B cell (primary cell): ENCODE measurements at regions of chr11 and their contacts with region 1.

Region 1: GRCh38 chr11:123407130-123407995 is 22.7 kb upstream of the GRAMD1B start:
- DNase-seq: peak; percentile 39
- ATAC-seq: peak; percentile 39
- H3K4me3 ChIP-seq: no peak overlapping the region
- H3K4me3 Mint-ChIP-seq: no peak overlapping the region
- H3K27ac ChIP-seq: no peak overlapping the region
- H3K27ac Mint-ChIP-seq: no peak overlapping the region
- H3K4me1 ChIP-seq: no peaks in the 10 kb centered on the region
- H3K4me1 Mint-ChIP-seq: peaks cover 12% of the 10 kb centered on the region
- H3K27me3 ChIP-seq: peaks cover 0 to 2% (median 0%) of the 10 kb centered on the region in 4 experiments
- H3K27me3 Mint-ChIP-seq: peaks cover 2% of the 10 kb centered on the region
- CTCF ChIP-seq: peak; percentile 59

Region 2: GRCh38 chr11:123301696-123302400 is 105.5 kb before region 1 on chr11:
- CTCF ChIA-PET with region 1: no interaction called
- POLR2A ChIA-PET with region 1: no interaction called
- intact Hi-C with region 1: no loop called
- DNase-seq: peak; percentile 63
- ATAC-seq: peak; percentile 77
- H3K4me3 ChIP-seq: peak overlapping the region; percentile 24 to 45 (median 39)
- H3K4me3 Mint-ChIP-seq: peak overlapping the region; percentile 71
- H3K27ac ChIP-seq: no peak overlapping the region
- H3K27ac Mint-ChIP-seq: peak overlapping the region; percentile 39
- H3K4me1 ChIP-seq: peaks cover 14 to 25% of the 10 kb centered on the region in 2 donors
- H3K4me1 Mint-ChIP-seq: peaks cover 28% of the 10 kb centered on the region
- H3K27me3 ChIP-seq: peaks cover 0 to 12% (median 5%) of the 10 kb centered on the region in 4 experiments
- H3K27me3 Mint-ChIP-seq: peaks cover 6% of the 10 kb centered on the region
- CTCF ChIP-seq: peak; percentile 86

Region 3: DNA sequence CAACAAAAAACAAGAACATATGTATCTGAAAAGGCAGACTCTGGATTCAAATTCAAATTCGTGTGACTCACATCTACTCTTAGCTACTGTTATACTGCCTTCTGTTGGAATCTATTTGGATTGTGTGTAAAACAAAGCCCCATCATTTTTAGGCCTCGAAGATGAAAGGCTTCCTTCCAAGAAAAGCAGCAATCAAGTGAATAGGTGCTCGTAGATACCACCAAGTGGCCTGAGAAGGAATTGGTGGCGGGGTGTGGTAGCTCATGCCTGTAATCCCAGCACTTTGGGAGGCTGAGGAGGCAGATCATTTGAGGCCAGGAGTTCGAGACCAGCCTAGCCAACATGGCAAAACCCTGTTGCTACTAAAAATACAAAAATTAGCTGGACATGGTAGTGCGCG is 26.9 kb after region 1 on chr11:
- CTCF ChIA-PET with region 1: interaction called, 10 read pairs
- POLR2A ChIA-PET with region 1: no interaction called
- intact Hi-C with region 1: no loop called
- DNase-seq: no peak
- ATAC-seq: no peak
- H3K4me3 ChIP-seq: no peak overlapping the region
- H3K4me3 Mint-ChIP-seq: no peak overlapping the region
- H3K27ac ChIP-seq: no peak overlapping the region
- H3K27ac Mint-ChIP-seq: no peak overlapping the region
- H3K4me1 ChIP-seq: peaks cover 0 to 6% of the 10 kb centered on the region in 2 donors
- H3K4me1 Mint-ChIP-seq: peaks cover 12% of the 10 kb centered on the region
- H3K27me3 ChIP-seq: peaks cover 0 to 9% (median 2%) of the 10 kb centered on the region in 4 experiments
- H3K27me3 Mint-ChIP-seq: peaks cover 8% of the 10 kb centered on the region
- CTCF ChIP-seq: no peak

Region 4: GRCh38 chr11:123469089-123469488 is 61.7 kb after region 1 on chr11:
- CTCF ChIA-PET with region 1: interaction called, 33 read pairs
- POLR2A ChIA-PET with region 1: no interaction called
- intact Hi-C with region 1: no loop called
- DNase-seq: no peak
- ATAC-seq: no peak
- H3K4me3 ChIP-seq: no peak overlapping the region
- H3K4me3 Mint-ChIP-seq: no peak overlapping the region
- H3K27ac ChIP-seq: no peak overlapping the region
- H3K27ac Mint-ChIP-seq: no peak overlapping the region
- H3K4me1 ChIP-seq: no peaks in the 10 kb centered on the region
- H3K4me1 Mint-ChIP-seq: peaks cover 6% of the 10 kb centered on the region
- H3K27me3 ChIP-seq: no peaks in the 10 kb centered on the region
- H3K27me3 Mint-ChIP-seq: no peaks in the 10 kb centered on the region
- CTCF ChIP-seq: no peak

Region 5: DNA sequence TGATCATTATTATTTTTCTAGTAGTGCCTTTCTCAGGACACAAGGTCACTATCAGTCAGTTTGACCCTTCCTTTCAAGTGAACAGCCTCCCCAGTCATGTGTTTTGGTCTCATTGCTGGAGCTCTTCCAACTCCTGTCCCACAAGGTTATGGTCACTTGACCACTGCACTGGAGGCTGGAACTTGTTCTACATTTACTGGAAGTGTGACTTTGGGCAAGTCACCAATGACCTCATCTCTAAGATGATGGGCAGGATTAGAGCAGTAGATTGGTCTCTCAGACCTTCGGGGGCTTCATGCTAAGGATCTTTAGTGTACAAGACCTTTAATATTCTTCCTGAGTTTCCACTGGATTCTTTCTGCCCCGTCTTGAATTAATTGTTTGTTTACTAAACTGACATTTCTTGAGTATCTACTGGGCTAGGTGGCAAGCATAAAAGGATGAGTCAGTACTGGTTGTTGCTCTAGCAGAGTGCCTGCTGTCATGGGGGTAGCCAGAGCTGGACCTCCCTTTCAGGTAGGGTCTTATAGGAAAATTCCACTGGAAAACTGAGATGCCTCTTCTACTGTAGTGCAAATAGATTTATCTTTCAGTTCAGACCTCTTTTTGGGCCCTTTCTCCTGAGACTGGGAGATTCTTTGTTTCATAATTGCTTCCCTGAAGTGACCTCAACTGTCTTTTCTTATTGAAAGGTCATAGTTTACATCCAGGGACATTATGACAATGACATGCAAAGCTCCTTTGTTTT is 129.5 kb after region 1 on chr11:
- CTCF ChIA-PET with region 1: no interaction called
- POLR2A ChIA-PET with region 1: no interaction called
- intact Hi-C with region 1: no loop called
- DNase-seq: no peak
- ATAC-seq: no peak
- H3K4me3 ChIP-seq: no peak overlapping the region
- H3K4me3 Mint-ChIP-seq: no peak overlapping the region
- H3K27ac ChIP-seq: no peak overlapping the region
- H3K27ac Mint-ChIP-seq: no peak overlapping the region
- H3K4me1 ChIP-seq: no peaks in the 10 kb centered on the region
- H3K4me1 Mint-ChIP-seq: peaks cover 5% of the 10 kb centered on the region
- H3K27me3 ChIP-seq: no peaks in the 10 kb centered on the region
- H3K27me3 Mint-ChIP-seq: no peaks in the 10 kb centered on the region
- CTCF ChIP-seq: no peak